Posterior cingulate gyrus (tissue), 11 donors: ENCODE measurements at regions of chr1 and their contacts with region 1.

Region 1: DNA sequence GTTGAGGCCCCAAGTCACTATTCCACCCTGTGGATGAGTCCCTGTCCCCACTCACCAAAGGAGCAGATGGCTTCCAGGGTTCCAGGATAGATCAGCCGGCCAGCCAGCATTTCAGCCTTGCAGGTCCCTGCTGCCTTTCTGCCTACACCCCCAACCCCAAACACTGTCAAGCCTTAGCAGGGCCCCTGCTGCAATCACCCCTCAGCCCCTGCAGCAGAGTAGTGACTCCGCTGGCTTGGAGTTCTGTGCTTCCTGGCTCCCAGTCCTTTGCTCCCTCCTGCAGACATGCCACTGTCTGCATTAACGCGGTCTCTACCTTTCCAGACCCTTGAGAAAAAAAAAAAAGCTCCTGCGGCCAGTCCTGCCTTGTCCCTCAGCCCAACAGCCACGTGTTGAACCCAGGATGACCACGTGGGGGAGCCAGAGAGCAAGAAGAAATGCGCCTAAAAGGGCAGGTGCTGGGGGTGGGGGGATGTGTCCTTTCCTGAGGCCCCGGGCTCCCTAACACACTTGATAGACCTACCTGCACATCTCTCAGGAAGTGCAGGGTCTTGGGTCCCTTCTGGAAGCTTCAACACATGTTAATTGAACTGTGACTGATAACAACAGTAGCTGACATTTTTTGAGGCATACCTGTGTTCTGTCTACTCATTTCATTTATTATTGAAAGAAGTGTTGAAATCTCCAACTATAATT is 37.4 kb downstream of the RASSF5 start:
- DNase-seq: peak; percentile 35 to 94 (median 74)

Region 2: DNA sequence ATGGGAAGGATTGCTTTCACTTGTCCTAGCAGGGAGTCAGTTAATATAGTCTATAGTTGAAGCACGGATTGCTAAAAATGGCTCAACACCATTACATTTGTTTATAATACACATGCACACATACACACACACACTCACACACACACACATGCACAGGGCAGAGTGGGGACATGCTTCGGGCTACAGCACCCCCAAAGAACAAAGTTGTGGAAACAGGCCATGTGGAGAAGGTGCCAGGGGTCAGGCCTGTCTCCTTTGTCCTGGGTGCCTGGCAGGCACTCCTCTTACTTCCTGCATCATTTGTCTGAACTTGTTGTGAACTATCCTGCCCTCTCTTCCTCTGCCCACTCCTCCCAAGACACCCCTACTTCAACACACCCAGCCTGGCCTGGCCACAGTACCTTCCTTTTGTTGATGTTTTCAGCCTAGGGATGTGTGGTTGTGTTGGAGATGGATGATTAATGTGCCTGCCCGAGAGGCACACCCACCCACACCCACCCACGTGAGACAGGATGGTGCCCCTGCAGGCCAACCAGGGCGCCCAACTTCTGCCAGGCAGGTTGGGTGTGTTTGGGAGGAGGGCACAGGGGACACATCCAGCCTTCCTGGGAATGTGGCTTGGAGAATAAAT is 19.9 kb before region 1 on chr1:
- intact Hi-C with region 1: no loop called
- DNase-seq: no peak

Region 3: GRCh38 chr1:206583707-206584648 is 39.3 kb after region 1 on chr1:
- intact Hi-C with region 1: loop called (anchors 1 kb)
- DNase-seq: peak; percentile 61 to 96 (median 84)